Natural killer cell (primary cell): ENCODE measurements at regions of chr1 and their contacts with region 1.

Region 1: DNA sequence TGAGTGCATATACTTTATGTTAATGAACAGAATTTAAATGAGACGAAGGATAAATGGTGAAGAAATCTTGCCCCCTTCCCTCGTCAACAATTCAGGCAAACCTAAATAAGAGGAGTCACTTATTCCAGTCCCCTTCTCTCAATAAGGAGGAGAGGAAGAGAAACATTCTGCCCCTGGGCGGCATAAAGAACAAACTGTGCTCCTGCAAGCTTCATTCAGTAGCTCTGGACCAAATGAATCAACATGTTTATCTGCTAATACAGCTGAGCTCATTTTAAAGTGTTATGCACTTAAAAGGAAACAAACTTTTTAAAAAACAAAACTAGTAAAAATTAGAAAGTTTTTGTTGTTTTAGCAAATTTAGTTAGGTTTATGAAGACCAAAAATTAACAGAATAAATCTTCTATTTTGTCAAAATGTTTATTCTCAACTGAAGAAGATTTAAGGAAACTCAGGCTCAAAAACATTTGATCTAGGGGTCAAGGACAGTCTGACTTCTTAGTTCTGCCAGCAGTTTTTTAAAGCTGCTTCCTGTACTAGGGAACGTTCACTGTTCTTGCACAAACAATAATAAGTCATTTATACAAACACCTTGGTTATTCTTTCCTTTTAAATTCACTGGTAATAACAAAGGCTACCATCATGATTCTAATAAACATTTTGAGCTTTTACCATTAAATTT is 58.3 kb downstream of the AKT3 start:
- DNase-seq: no peak
- ATAC-seq: no peak
- H3K4me3 ChIP-seq: no peak overlapping the region
- H3K4me3 Mint-ChIP-seq: no peak overlapping the region
- H3K27ac ChIP-seq: no peak overlapping the region
- H3K27ac Mint-ChIP-seq: peak overlapping the region in 1 of 2 donors; percentile 81
- H3K4me1 ChIP-seq: peaks cover 10% of the 10 kb centered on the region
- H3K4me1 Mint-ChIP-seq: peaks cover 45 to 68% of the 10 kb centered on the region in 2 donors
- H3K27me3 ChIP-seq: no peaks in the 10 kb centered on the region
- H3K27me3 Mint-ChIP-seq: no peaks in the 10 kb centered on the region
- CTCF ChIP-seq: no peak

Region 2: DNA sequence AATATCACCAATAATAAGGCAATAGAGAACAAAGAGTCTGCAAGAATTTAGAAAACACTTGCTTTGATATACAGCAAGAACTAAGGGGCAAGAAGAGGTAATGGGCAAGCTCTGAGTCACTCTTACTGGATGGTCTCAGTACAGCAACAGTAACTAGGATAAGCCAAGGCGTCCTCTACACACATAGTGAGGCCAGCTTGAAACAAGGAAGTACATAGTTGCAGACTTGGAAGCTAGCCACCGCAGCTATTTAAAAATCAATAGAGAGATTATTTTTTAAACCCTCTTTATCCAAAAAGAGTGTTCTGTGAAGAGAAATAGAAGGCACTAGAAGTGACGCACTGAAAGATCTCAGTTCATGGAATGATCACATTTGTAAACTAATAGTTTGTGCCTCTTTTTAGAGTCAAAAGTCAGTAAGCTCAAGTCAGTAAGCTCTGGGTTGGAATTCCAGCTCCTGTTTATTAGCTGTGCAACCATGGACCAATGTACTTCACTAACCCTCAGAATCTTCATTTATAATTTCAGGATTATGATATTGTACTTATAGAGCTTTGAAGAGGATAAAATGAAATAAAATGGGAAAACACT is 60.3 kb before region 1 on chr1:
- intact Hi-C with region 1: no loop called
- DNase-seq: no peak
- ATAC-seq: peak in 2 of 3 donors; percentile 38 to 54
- H3K4me3 ChIP-seq: no peak overlapping the region
- H3K4me3 Mint-ChIP-seq: no peak overlapping the region
- H3K27ac ChIP-seq: no peak overlapping the region
- H3K27ac Mint-ChIP-seq: peak overlapping the region in 1 of 2 donors; percentile 10
- H3K4me1 ChIP-seq: peaks cover 23% of the 10 kb centered on the region
- H3K4me1 Mint-ChIP-seq: peaks cover 50 to 72% of the 10 kb centered on the region in 2 donors
- H3K27me3 ChIP-seq: no peaks in the 10 kb centered on the region
- H3K27me3 Mint-ChIP-seq: no peaks in the 10 kb centered on the region
- CTCF ChIP-seq: no peak

Region 3: GRCh38 chr1:243850452-243851256 is 58.9 kb after region 1 on chr1:
- intact Hi-C with region 1: loop called (anchors 5 kb)
- DNase-seq: peak; percentile 81 to 90
- ATAC-seq: peak; percentile 42 to 58 (median 52)
- H3K4me3 ChIP-seq: peak overlapping the region; percentile 85
- H3K4me3 Mint-ChIP-seq: peak overlapping the region; percentile 90
- H3K27ac ChIP-seq: peak overlapping the region; percentile 89
- H3K27ac Mint-ChIP-seq: peak overlapping the region; percentile 89 to 99
- H3K4me1 ChIP-seq: peaks cover 10% of the 10 kb centered on the region
- H3K4me1 Mint-ChIP-seq: peaks cover 26 to 30% of the 10 kb centered on the region in 2 donors
- H3K27me3 ChIP-seq: no peaks in the 10 kb centered on the region
- H3K27me3 Mint-ChIP-seq: peaks cover 5 to 8% of the 10 kb centered on the region in 2 donors
- CTCF ChIP-seq: no peak